AG04449 (cell line): ENCODE measurements at regions of chr17 and their contacts with region 1.

Region 1: DNA sequence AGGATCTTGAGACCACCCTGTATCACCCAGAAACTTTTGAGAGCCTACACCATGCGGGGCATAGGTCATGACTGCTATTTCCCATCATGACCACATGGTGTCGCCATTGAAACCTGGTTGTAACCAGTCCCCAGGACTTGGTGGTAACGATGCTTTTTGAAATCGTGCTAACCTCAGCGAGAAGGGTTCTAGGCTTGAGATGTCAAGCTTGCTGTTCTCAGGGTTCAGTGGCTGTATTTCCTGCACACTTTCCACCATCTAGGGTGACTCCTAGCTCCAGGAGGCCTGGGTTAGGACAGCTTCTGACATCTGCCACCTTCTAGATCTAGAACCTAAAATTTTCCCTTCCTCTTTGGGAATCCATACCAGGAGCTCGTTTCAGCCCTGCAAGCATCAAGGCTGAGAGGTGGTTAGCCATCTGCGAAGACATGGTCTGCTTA is 13.0 kb upstream of the SPNS3 start:
- DNase-seq: peak; percentile 12
- H3K4me3 ChIP-seq: no peak overlapping the region; the same call in 1 of the 2 replicates
- CTCF ChIP-seq: peak; percentile 80

Region 2: GRCh38 chr17:4407851-4408250 is 12.9 kb before region 1 on chr17:
- CTCF ChIA-PET with region 1: interaction called, 19 read pairs
- POLR2A ChIA-PET with region 1: no interaction called
- DNase-seq: no peak
- H3K4me3 ChIP-seq: no peak overlapping the region
- CTCF ChIP-seq: no peak

Region 3: DNA sequence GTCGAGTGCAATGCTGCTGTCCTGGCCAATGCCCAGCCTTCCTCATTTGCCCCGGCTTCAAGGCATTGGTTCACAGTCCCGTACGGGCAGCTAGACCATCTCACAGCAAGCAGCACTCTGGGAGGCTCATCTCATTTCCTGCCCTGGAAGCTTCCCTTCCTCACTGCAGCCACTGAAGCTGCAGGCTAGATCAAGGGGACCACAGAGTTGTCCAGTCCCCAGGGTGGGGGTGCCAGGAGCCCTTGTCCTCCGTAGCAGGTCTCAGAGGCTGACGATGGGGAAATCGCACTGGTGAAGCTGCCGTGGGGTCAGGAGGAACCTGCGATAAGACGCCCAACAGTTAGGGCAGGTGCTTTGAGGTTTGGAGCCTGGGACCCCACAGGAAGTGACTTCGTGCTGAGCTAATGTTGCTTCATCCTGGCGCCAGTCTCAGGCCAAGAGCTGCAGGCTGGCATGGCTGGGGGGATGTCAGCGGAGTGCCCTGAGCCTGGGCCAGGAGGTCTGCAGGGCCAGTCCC is 12.9 kb after region 1 on chr17 and contains the start of gene SPNS3:
- CTCF ChIA-PET with region 1: interaction called, 19 read pairs
- POLR2A ChIA-PET with region 1: interaction called, 4 read pairs
- DNase-seq: no peak
- H3K4me3 ChIP-seq: no peak within 1 kb of the TSS
- CTCF ChIP-seq: no peak